MCF 10A (cell line): ENCODE measurements at regions of chr3 and their contacts with region 1.

Region 1: DNA sequence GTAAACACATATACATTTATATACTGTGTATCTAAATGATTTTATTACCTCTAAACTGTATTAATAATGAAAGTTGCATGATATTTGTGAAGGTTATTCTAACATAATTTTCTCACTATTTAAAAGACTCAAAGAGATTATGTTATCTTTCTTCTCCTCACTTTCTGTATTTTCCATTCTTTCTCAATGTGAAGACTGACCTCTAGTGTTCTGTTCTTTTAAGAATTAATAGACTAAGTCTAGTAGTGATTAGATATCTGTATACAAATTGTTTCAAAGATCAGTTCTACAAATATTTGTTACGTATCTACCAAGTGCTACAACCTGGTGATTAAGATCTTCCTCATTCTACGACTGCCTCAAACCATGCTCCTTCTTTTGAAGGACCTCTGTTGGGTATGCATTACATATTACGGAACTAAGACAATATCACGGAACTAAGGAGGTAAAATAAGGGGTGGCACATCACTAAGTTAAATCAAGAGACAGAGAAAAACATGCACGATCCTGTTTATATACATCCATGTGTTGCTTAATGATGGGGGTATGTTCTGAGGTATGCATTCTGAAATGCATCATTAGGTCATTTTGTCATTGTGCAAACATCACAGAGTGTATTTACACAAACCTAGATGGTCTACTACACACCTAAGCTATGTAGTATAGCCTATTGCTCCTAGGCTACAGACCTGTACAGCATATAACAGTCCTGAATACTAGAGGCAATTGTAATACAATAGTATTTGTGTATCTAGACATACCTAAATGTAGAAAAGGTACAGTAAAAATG is 161.5 kb upstream of the KBTBD8 start:
- DNase-seq: no peak
- H3K4me3 Mint-ChIP-seq: no peak overlapping the region
- H3K27ac Mint-ChIP-seq: no peak overlapping the region
- H3K4me1 Mint-ChIP-seq: no peaks in the 10 kb centered on the region
- H3K27me3 Mint-ChIP-seq: no peaks in the 10 kb centered on the region
- CTCF ChIP-seq: no peak

Region 2: GRCh38 chr3:66276705-66277274 is 559.8 kb before region 1 on chr3:
- CTCF ChIA-PET with region 1: interaction called, 3 read pairs
- POLR2A ChIA-PET with region 1: no interaction called
- intact Hi-C with region 1: loop called (anchors 5 kb)
- DNase-seq: peak; percentile 68
- H3K4me3 Mint-ChIP-seq: no peak overlapping the region
- H3K27ac Mint-ChIP-seq: no peak overlapping the region
- H3K4me1 Mint-ChIP-seq: no peaks in the 10 kb centered on the region
- H3K27me3 Mint-ChIP-seq: no peaks in the 10 kb centered on the region
- CTCF ChIP-seq: peak; percentile 56

Region 3: GRCh38 chr3:66904831-66905493 is 68.4 kb after region 1 on chr3:
- CTCF ChIA-PET with region 1: no interaction called
- POLR2A ChIA-PET with region 1: no interaction called
- intact Hi-C with region 1: no loop called
- DNase-seq: no peak
- H3K4me3 Mint-ChIP-seq: no peak overlapping the region
- H3K27ac Mint-ChIP-seq: no peak overlapping the region
- H3K4me1 Mint-ChIP-seq: no peaks in the 10 kb centered on the region
- H3K27me3 Mint-ChIP-seq: peaks cover 40% of the 10 kb centered on the region
- CTCF ChIP-seq: no peak

Region 4: DNA sequence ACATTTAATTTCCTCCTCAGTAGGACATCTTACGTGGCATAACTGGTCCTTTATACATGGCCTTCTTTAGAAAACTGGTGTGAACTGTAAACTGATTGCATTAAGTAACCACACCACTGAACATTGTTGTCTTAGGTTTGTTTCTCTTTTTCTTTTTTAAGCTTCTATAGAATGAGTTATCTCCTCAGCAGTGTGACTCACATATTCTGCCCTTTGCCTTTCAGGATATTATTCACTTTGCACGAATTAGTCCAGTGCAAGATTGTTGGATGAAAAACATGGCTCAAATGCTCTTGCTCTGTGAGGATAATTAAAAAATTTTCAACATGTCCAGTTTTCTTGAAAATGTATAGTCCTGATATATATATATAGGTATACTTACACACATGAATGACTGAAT is 309.2 kb after region 1 on chr3:
- CTCF ChIA-PET with region 1: no interaction called
- POLR2A ChIA-PET with region 1: no interaction called
- intact Hi-C with region 1: no loop called
- DNase-seq: no peak
- H3K4me3 Mint-ChIP-seq: no peak overlapping the region
- H3K27ac Mint-ChIP-seq: no peak overlapping the region
- H3K4me1 Mint-ChIP-seq: no peaks in the 10 kb centered on the region
- H3K27me3 Mint-ChIP-seq: no peaks in the 10 kb centered on the region
- CTCF ChIP-seq: no peak

Region 5: DNA sequence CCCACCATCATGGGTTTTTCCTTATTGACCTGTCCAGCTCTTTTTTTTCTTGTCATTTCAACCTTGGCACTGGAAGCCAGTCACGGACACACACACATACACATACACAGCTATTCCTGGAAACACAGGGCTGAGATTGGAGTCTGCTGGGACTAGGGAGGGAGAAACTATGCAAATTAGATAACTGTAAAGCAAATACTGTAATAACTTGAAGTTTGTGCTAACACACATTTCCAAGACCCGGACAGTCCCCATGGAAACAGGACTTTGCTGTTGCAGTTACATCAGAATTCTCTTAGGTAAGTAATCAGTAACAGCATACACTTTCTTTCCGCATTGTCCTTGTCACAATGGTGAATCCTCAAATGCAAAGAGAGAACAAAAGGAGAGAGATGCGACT is 465.9 kb after region 1 on chr3:
- CTCF ChIA-PET with region 1: no interaction called
- POLR2A ChIA-PET with region 1: no interaction called
- intact Hi-C with region 1: no loop called
- DNase-seq: no peak
- H3K4me3 Mint-ChIP-seq: no peak overlapping the region
- H3K27ac Mint-ChIP-seq: no peak overlapping the region
- H3K4me1 Mint-ChIP-seq: no peaks in the 10 kb centered on the region
- H3K27me3 Mint-ChIP-seq: no peaks in the 10 kb centered on the region
- CTCF ChIP-seq: no peak